Adrenal gland (tissue), 19 donors: ENCODE measurements at regions of chrX and their contacts with region 1.

Region 1: DNA sequence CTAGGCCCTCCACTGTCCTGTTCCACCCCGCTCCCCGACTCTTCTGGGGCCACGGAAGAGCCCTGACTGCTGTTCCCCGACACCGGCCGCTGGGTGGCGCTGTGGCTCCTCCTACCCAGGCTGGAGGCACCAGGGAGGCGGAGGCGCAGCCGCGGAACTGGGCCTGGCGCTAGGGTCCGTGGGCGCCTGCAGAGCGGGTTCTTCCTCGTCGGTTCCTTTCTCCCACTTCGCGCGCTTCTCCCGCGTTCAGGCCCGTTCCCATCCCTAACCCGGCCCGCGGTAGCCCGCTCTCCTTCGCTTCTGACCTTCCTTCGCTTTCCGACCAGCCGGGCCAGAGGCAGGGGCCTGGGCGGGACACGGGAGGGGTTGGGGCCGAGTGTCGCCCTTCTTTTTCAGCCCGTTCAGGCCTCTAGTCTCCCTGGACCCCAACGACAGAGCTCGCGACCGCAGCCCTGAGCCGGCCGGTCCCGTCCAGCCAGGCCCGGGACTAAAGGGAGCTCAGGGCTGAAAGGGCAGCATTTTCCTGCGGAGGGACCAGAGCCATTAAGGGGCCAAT is 34.3 kb downstream of the NALF2 start:
- DNase-seq: peak; percentile 66 to 83 (median 78)
- H3K4me3 ChIP-seq: peak overlapping the region in 2 of 4 donors; percentile 14 to 57
- H3K27ac ChIP-seq: peak overlapping the region in 1 of 5 donors; percentile 48
- H3K4me1 ChIP-seq: peaks cover 0 to 3% of the 10 kb centered on the region in 2 donors
- H3K27me3 ChIP-seq: no peaks in the 10 kb centered on the region
- CTCF ChIP-seq: peak; percentile 57 to 89 (median 77)
- POLR2A ChIP-seq: no peak

Region 2: GRCh38 chrX:69603566-69604194 is 65.3 kb after region 1 on chrX:
- intact Hi-C with region 1: no loop called
- DNase-seq: no peak
- H3K4me3 ChIP-seq: no peak overlapping the region
- H3K27ac ChIP-seq: no peak overlapping the region
- H3K4me1 ChIP-seq: no peaks in the 10 kb centered on the region
- H3K27me3 ChIP-seq: peaks cover 9% of the 10 kb centered on the region
- CTCF ChIP-seq: no peak
- POLR2A ChIP-seq: no peak

Region 3: GRCh38 chrX:69615779-69616456 is 77.5 kb after region 1 on chrX and contains the start of gene EDA:
- intact Hi-C with region 1: loop called in 1 of 2 experiments (anchors 5 kb)
- DNase-seq: peak; percentile 85 to 91 (median 88)
- H3K4me3 ChIP-seq: peak within 1 kb of the TSS in 3 of 4 donors; percentile 40 to 71 (median 45)
- H3K27ac ChIP-seq: peak within 1 kb of the TSS in 2 of 5 donors; percentile 52 to 83
- H3K4me1 ChIP-seq: peaks cover 0 to 10% of the 10 kb centered on the region in 2 donors
- H3K27me3 ChIP-seq: peaks cover 23% of the 10 kb centered on the region
- CTCF ChIP-seq: no peak
- POLR2A ChIP-seq: peak in 1 of 2 donors; percentile 24
- total RNA-seq, gene EDA: 6.9 to 25.0 (median 17.4) TPM

Region 4: GRCh38 chrX:70030301-70030767 is 491.9 kb after region 1 on chrX:
- intact Hi-C with region 1: loop called in 1 of 2 experiments (anchors 5 kb)
- DNase-seq: peak; percentile 32 to 65 (median 40)
- H3K4me3 ChIP-seq: no peak overlapping the region
- H3K27ac ChIP-seq: no peak overlapping the region
- H3K4me1 ChIP-seq: no peaks in the 10 kb centered on the region
- H3K27me3 ChIP-seq: peaks cover 10% of the 10 kb centered on the region
- CTCF ChIP-seq: peak; percentile 57 to 84 (median 70)
- POLR2A ChIP-seq: no peak